ENCODE measurements at regions of chr15 and their contacts with region 1.

Region 1: GRCh38 chr15:60326824-60327654 is 70.7 kb downstream of the ANXA2 start:
- DNase-seq: no peak
- ATAC-seq: peak in 3 of 4 donors; percentile 67 to 78 (median 70)
- H3K4me3 ChIP-seq: no peak overlapping the region
- H3K27ac ChIP-seq: no peak overlapping the region
- H3K4me1 ChIP-seq: no peaks in the 10 kb centered on the region
- H3K27me3 ChIP-seq: peaks cover 0 to 25% (median 4%) of the 10 kb centered on the region in 4 donors
- CTCF ChIP-seq: peak; percentile 48 to 66 (median 58)

Region 2: DNA sequence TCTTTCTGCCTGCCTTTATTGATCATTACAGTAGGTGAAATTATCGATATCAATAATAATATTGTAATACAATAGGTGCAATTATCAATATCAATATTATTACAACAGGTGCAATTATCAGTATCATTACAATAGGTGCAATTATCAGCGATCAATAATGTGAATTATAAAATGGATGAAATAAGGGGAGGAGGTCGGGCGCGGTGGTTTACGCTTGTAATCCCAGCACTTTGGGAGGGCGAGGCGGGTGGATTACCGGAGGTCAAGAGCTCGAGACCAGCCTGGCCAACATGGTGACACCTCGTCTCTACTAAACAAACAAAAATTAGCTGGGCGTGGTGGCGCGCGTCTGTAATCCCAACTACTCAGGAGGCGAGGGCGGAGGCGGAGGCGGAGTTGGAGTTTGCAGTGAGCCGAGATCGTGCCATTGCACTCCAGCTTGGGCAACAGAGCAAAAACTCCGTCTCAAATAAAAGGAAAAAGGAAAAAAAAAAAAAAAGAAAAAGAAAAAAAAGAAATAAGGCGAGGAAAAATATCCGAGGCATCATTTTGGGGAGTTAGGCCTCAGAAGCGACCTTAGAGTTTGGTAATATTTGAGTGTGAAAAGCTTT is 637.3 kb before region 1 on chr15:
- intact Hi-C with region 1: loop called in 1 of 3 experiments (anchors 10 kb)
- DNase-seq: peak; percentile 79 to 89 (median 84)
- ATAC-seq: peak; percentile 74 to 75 (median 75)
- H3K4me3 ChIP-seq: peak overlapping the region; percentile 74 to 98 (median 86)
- H3K27ac ChIP-seq: peak overlapping the region; percentile 95 to 99 (median 98)
- H3K4me1 ChIP-seq: peaks cover 10 to 27% (median 25%) of the 10 kb centered on the region in 3 donors
- H3K27me3 ChIP-seq: no peaks in the 10 kb centered on the region
- CTCF ChIP-seq: no peak

Region 3: GRCh38 chr15:59917504-59918157 is 409.4 kb before region 1 on chr15:
- intact Hi-C with region 1: loop called in 1 of 3 experiments (anchors 10 kb)
- DNase-seq: peak; percentile 34 to 77 (median 58)
- ATAC-seq: peak; percentile 68 to 98 (median 94)
- H3K4me3 ChIP-seq: no peak overlapping the region
- H3K27ac ChIP-seq: no peak overlapping the region
- H3K4me1 ChIP-seq: no peaks in the 10 kb centered on the region
- H3K27me3 ChIP-seq: peaks cover 0 to 7% (median 1%) of the 10 kb centered on the region in 4 donors
- CTCF ChIP-seq: peak; percentile 22 to 47 (median 34)

Region 4: GRCh38 chr15:60272625-60273024 is 54.4 kb before region 1 on chr15:
- intact Hi-C with region 1: no loop called
- DNase-seq: no peak
- ATAC-seq: no peak
- H3K4me3 ChIP-seq: no peak overlapping the region
- H3K27ac ChIP-seq: no peak overlapping the region
- H3K4me1 ChIP-seq: no peaks in the 10 kb centered on the region
- H3K27me3 ChIP-seq: no peaks in the 10 kb centered on the region
- CTCF ChIP-seq: no peak